ENCODE measurements at regions of chr1 and their contacts with region 1.

Region 1: GRCh38 chr1:85200870-85201339 is at the start of gene SYDE2:
- DNase-seq: peak; percentile 79
- ATAC-seq: peak; percentile 76
- H3K4me3 Mint-ChIP-seq: peak within 1 kb of the TSS; percentile 90
- H3K27ac Mint-ChIP-seq: peak within 1 kb of the TSS; percentile 88
- H3K4me1 Mint-ChIP-seq: peaks cover 25% of the 10 kb centered on the region
- H3K27me3 Mint-ChIP-seq: peaks cover 12% of the 10 kb centered on the region
- total RNA-seq, gene SYDE2: 2.9 to 3.3 TPM

Region 2: DNA sequence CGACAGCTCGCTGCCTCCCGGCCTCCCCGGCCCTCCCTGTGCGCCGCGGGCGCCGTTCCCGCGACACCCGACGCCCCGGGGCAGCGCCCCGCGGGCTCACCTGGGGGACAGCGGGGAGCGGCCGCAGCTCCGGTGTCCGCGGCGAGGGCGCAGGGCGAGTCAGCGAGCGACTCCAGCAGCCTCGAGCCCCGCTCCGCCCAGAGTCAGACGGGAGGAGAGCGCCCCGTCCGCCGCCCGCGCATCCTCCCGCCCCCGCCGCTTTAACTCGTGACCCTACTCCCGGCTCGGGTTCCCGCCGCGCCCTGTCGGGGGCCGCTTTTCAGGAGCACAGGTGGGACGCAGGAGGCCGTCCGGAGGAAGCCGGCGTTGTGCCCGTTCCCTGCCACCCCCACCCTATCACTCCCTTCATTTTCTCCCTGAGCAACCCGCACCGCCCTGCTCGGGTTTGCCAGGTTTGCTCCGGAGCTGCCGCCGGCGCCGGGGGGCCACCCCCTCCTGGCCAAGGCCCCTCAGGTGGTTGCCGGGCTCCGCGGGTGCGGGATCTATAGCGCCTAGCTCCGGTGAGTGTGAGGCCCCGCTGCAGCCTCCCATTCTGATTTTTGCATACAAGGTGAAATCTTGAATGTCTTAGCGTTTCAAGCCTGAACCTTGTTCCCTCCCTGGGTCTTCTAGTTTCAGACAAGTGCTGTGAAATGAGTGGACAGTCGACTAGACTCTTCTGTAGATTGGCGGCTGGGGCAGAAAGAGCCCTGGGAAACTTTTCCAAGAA is 152.4 kb before region 1 on chr1 and contains the start of gene MCOLN3:
- CTCF ChIA-PET with region 1: no interaction called
- POLR2A ChIA-PET with region 1: no interaction called
- intact Hi-C with region 1: loop called (anchors 2 to 5 kb)
- DNase-seq: peak; percentile 62
- ATAC-seq: peak; percentile 60
- H3K4me3 Mint-ChIP-seq: peak within 1 kb of the TSS; percentile 62
- H3K27ac Mint-ChIP-seq: no peak within 1 kb of the TSS
- H3K4me1 Mint-ChIP-seq: peaks cover 21% of the 10 kb centered on the region
- H3K27me3 Mint-ChIP-seq: peaks cover 48% of the 10 kb centered on the region
- total RNA-seq, gene MCOLN3: 0.16 to 0.23 TPM

Region 3: DNA sequence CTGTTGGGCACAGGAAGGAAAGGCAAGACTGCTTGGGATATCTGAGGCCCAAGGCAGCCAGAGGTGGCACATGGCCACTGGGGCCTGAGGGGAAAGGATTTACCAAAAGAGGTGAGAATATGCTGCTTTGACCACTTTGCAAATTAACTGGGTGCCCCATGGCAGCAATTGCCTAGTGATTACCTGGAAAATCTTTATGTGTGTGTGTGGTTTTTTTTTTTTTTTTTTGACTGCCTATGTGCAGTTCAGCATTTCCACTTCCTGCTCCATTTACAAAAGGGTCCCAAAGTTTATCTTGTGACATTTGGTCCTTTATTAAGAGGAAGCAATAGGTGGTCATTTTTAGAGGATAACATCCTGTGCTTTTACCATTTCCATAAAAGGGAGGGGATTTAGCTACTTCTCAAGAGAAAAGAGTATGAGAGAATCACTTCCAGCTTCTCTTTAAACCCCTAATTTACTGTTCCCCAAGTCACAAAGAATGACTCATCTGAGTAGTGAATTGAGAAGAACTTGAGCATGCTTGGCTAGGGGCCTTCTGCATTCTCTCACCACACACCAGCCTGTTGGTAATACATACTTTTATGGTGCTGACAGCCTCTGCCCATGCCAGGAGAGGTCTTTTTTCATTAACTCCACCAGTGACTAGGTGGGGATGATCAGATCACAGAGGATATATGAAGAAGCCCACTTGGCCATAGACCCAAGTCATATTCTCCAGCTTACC is 52.2 kb before region 1 on chr1:
- CTCF ChIA-PET with region 1: no interaction called
- POLR2A ChIA-PET with region 1: no interaction called
- intact Hi-C with region 1: loop called in 1 of 2 experiments (anchors 2 kb)
- DNase-seq: peak; percentile 41
- ATAC-seq: peak; percentile 94
- H3K4me3 Mint-ChIP-seq: no peak overlapping the region
- H3K27ac Mint-ChIP-seq: peak overlapping the region; percentile 56
- H3K4me1 Mint-ChIP-seq: peaks cover 20% of the 10 kb centered on the region
- H3K27me3 Mint-ChIP-seq: peaks cover 2% of the 10 kb centered on the region

Measured in activated CD4-positive, alpha-beta T cell treated with anti-CD3 and anti-CD28 coated beads for 36 hours (primary cell).